ENCODE measurements at regions of chr15 and their contacts with region 1.

Region 1: GRCh38 chr15:65818927-65819562 is 27.0 kb upstream of the DENND4A start:
- DNase-seq: no peak
- ATAC-seq: peak; percentile 91
- H3K4me3 Mint-ChIP-seq: peak overlapping the region; percentile 40
- H3K27ac Mint-ChIP-seq: peak overlapping the region; percentile 53
- H3K4me1 Mint-ChIP-seq: peaks cover 52% of the 10 kb centered on the region
- H3K27me3 Mint-ChIP-seq: peaks cover 2% of the 10 kb centered on the region

Region 2: DNA sequence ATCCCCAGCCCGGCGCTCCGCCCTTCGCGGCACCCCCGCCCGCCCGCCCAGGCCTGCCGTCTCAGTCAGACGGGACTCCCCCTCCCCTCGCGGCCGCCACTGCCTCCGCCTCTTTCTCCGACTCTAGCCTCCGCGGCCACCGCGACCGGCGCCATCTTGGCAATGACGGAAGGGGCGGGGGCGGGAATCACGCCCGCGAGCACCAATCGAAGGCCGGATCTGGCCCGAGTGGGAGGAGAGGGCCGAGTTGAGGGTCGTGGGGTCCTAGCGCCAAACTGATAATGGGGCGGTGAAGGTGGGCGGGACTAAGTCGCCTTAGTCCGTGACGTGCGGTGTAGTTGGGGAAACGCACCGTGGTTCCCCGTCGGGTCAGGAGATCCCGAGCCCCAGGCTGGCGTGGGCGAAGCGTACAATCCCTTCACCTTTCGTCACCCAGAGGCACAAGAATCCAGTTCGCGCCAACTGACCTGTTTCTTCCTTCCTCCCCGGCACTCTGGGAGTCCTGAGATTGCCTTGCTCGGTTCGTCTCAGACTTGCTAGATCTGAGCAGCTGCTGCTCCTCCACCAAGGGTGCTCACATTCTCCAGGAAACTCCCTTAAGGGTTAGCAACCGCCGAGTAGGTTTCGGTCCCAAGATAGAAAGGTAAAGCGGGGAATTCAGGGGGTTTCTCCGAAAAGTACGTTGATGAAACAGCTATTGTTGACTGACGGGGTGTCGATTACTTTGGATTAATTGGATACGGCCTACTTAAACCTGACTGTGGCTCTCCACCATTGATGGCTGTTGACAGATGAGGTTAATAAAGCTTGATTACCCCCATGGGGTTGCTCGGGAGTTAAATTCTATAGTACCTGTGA is 26.7 kb before region 1 on chr15 and contains the start of gene DENND4A:
- CTCF ChIA-PET with region 1: interaction called, 30 read pairs
- DNase-seq: peak; percentile 99
- ATAC-seq: peak; percentile 84
- H3K4me3 Mint-ChIP-seq: peak within 1 kb of the TSS; percentile 93
- H3K27ac Mint-ChIP-seq: peak within 1 kb of the TSS; percentile 97
- H3K4me1 Mint-ChIP-seq: peaks cover 63% of the 10 kb centered on the region
- H3K27me3 Mint-ChIP-seq: no peaks in the 10 kb centered on the region
- total RNA-seq, gene DENND4A: 47.3 to 52.0 TPM

Region 3: DNA sequence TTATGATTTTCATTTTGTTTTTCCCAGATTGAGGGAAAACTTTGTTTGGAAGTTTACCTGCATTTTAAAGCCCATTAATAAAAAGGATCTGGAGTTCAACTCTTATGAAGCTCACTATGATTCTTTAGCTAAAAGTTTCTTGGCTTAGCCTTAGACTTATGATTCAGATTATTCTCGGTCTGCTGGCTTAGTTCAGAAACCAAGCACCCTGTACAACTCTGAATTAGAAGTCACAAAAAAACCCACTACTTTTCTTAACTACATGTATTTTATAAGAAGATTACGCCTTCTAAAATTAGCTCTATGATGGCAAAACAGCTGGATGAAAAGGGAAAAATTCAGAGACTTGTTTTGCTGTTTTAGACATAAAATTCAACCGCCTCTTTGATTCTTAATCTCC is 12.6 kb before region 1 on chr15:
- CTCF ChIA-PET with region 1: interaction called, 17 read pairs
- DNase-seq: no peak
- ATAC-seq: no peak
- H3K4me3 Mint-ChIP-seq: peak overlapping the region; percentile 79
- H3K27ac Mint-ChIP-seq: peak overlapping the region; percentile 80
- H3K4me1 Mint-ChIP-seq: peaks cover 40% of the 10 kb centered on the region
- H3K27me3 Mint-ChIP-seq: no peaks in the 10 kb centered on the region

Measured in activated CD8-positive, alpha-beta memory T cell treated with anti-CD3 and anti-CD28 coated beads, Interleukin-2, amount 10 ng/mL, durations not matched to agents 7 days and 5 days (primary cell).